Common myeloid progenitor, CD34-positive (primary cell): ENCODE measurements at regions of chr17 and their contacts with region 1.

Region 1: GRCh38 chr17:19447085-19447583 is 36.1 kb downstream of the RNF112 start:
- DNase-seq: peak; percentile 63 to 76 (median 64)
- H3K4me3 ChIP-seq: no peak overlapping the region
- H3K27ac ChIP-seq: no peak overlapping the region
- H3K4me1 ChIP-seq: peaks cover 0 to 16% (median 8%) of the 10 kb centered on the region in 4 experiments
- H3K27me3 ChIP-seq: peaks cover 0 to 16% (median 4%) of the 10 kb centered on the region in 5 experiments

Region 2: DNA sequence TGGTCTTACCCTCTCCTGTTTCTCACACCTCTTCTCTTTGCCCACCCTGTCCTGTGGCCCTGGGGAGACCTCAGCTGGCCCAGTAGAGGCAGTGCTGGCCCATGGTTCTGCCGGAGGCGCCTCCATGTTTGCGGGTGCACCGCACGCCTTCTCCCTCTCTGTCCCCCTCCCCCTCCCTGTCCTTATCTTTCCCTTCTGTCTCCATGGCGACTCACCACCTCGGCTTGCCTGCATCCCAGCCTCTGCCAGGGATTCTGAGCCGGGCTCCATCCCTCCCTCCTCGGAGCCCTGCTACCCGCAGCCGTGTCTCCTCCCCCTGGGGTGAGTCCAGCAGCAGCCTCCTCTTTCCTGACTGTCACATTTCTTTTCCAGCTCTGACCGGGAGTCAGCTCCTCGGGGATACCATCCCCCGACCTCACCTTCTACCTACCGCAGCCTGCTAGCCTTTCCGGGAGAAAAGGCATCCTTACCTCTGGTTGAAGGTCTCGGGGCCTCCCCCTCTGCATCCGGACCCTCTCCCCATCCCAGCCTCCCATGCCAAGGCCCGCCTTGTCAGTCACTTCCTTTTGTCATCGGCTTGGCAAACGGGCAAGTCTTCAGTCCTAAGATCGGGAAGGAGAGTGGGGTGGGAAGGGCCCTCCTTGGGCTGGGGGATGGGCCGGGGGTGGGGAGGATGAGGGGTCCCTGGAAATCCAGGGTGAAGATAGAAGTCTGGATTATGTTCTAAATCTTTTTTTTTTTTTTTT is 36.1 kb before region 1 on chr17 and contains the start of gene RNF112:
- CTCF ChIA-PET with region 1: no interaction called
- POLR2A ChIA-PET with region 1: no interaction called
- DNase-seq: no peak
- H3K4me3 ChIP-seq: no peak within 1 kb of the TSS
- H3K27ac ChIP-seq: no peak within 1 kb of the TSS
- H3K4me1 ChIP-seq: no peaks in the 10 kb centered on the region
- H3K27me3 ChIP-seq: peaks cover 0 to 24% (median 5%) of the 10 kb centered on the region in 5 experiments

Region 3: GRCh38 chr17:19433727-19434340 is 13.3 kb before region 1 on chr17:
- CTCF ChIA-PET with region 1: interaction called, 10 read pairs
- POLR2A ChIA-PET with region 1: no interaction called
- DNase-seq: no peak
- H3K4me3 ChIP-seq: no peak overlapping the region
- H3K27ac ChIP-seq: no peak overlapping the region
- H3K4me1 ChIP-seq: no peaks in the 10 kb centered on the region
- H3K27me3 ChIP-seq: peaks cover 0 to 5% (median 0%) of the 10 kb centered on the region in 5 experiments

Region 4: DNA sequence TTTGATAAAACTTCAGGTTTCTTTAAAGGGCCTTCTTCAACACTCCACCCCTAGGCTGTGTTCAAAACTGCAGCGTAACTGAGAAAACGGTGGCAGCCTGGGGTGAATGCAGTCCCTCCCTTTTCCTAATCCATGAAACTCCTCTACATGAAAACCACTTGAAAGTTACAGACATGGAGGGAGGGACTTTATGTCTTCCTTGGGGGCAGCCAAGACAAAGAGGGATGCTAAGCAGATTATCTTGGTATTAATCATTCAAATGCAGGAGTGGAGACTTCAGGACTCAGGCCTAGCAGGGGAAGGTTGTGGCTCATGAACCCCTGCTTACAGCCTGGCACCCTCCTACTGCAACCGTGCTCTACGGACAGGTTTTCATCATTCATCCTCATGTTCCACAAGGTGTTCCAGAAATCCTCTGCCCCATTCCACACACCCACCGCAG is 10.7 kb after region 1 on chr17:
- CTCF ChIA-PET with region 1: interaction called, 24 read pairs
- POLR2A ChIA-PET with region 1: no interaction called
- DNase-seq: no peak
- H3K4me3 ChIP-seq: no peak overlapping the region
- H3K27ac ChIP-seq: no peak overlapping the region
- H3K4me1 ChIP-seq: peaks cover 0 to 11% (median 5%) of the 10 kb centered on the region in 4 experiments
- H3K27me3 ChIP-seq: peaks cover 0 to 22% (median 10%) of the 10 kb centered on the region in 5 experiments

Region 5: GRCh38 chr17:20091174-20092029 is 644.3 kb after region 1 on chr17:
- CTCF ChIA-PET with region 1: no interaction called
- POLR2A ChIA-PET with region 1: no interaction called
- DNase-seq: no peak
- H3K4me3 ChIP-seq: no peak overlapping the region
- H3K27ac ChIP-seq: no peak overlapping the region
- H3K4me1 ChIP-seq: peaks cover 0 to 11% (median 7%) of the 10 kb centered on the region in 4 experiments
- H3K27me3 ChIP-seq: no peaks in the 10 kb centered on the region